ENCODE measurements at regions of chr15 and their contacts with region 1.

Region 1: GRCh38 chr15:89378296-89379151 is 43.9 kb upstream of the POLG start:
- DNase-seq: peak; percentile 37
- ATAC-seq: peak; percentile 74
- H3K4me3 Mint-ChIP-seq: peak overlapping the region; percentile 79
- H3K27ac Mint-ChIP-seq: peak overlapping the region; percentile 46
- H3K4me1 Mint-ChIP-seq: peaks cover 13% of the 10 kb centered on the region
- H3K27me3 Mint-ChIP-seq: peaks cover 60% of the 10 kb centered on the region
- CTCF ChIP-seq: no peak

Region 2: GRCh38 chr15:88440021-88440420 is 938.5 kb before region 1 on chr15:
- CTCF ChIA-PET with region 1: no interaction called
- POLR2A ChIA-PET with region 1: no interaction called
- intact Hi-C with region 1: no loop called
- DNase-seq: no peak
- ATAC-seq: no peak
- H3K4me3 Mint-ChIP-seq: no peak overlapping the region
- H3K27ac Mint-ChIP-seq: no peak overlapping the region
- H3K4me1 Mint-ChIP-seq: no peaks in the 10 kb centered on the region
- H3K27me3 Mint-ChIP-seq: peaks cover 44% of the 10 kb centered on the region
- CTCF ChIP-seq: no peak

Region 3: DNA sequence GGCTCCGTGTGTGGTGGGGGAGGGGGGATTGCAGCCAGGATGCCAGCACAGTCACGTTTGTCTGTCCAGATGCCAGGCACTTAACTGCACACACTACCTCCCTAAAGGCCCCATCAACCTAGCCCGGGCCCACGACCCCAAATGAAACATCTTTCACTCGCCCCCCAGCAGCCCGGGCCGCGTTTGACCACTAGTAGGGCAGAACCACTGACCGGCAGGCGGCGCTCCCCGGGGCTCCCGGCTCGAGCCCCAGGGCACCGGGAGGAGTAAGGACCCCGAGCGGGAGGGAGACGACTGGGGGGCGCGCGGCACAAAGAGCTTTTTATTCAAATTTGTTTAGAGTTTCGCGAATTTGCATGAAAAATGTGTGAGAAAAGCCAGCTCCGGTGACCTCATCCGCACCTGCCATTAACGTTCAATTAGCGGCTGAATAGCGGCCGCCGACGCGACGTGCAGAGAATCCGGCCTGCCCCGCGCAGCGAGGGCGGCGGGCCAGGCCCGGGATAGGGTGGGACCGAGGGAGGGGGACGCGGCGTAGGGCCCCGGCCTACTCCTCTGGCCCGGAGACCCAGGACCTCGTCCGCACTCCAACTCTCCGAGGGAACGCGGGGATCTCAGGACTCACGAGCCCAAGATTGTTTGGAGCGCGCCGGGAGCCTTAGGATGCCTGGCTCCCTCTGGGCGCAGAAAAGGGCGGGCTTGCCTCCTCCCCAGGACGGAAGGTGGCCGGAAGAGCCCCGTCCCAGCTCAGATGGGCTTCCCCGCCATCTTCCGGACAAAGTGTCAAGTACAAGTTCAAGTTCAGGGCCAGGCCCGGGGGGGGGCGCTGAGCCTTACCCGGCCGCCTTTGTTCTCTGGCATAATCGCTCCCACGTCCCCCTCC is 21.0 kb after region 1 on chr15:
- CTCF ChIA-PET with region 1: interaction called, 3 read pairs
- POLR2A ChIA-PET with region 1: interaction called, 3 read pairs
- intact Hi-C with region 1: loop called (anchors 2 kb)
- DNase-seq: peak; percentile 35
- ATAC-seq: peak; percentile 76
- H3K4me3 Mint-ChIP-seq: peak overlapping the region; percentile 84
- H3K27ac Mint-ChIP-seq: no peak overlapping the region
- H3K4me1 Mint-ChIP-seq: peaks cover 21% of the 10 kb centered on the region
- H3K27me3 Mint-ChIP-seq: peaks cover 50% of the 10 kb centered on the region
- CTCF ChIP-seq: no peak

Region 4: DNA sequence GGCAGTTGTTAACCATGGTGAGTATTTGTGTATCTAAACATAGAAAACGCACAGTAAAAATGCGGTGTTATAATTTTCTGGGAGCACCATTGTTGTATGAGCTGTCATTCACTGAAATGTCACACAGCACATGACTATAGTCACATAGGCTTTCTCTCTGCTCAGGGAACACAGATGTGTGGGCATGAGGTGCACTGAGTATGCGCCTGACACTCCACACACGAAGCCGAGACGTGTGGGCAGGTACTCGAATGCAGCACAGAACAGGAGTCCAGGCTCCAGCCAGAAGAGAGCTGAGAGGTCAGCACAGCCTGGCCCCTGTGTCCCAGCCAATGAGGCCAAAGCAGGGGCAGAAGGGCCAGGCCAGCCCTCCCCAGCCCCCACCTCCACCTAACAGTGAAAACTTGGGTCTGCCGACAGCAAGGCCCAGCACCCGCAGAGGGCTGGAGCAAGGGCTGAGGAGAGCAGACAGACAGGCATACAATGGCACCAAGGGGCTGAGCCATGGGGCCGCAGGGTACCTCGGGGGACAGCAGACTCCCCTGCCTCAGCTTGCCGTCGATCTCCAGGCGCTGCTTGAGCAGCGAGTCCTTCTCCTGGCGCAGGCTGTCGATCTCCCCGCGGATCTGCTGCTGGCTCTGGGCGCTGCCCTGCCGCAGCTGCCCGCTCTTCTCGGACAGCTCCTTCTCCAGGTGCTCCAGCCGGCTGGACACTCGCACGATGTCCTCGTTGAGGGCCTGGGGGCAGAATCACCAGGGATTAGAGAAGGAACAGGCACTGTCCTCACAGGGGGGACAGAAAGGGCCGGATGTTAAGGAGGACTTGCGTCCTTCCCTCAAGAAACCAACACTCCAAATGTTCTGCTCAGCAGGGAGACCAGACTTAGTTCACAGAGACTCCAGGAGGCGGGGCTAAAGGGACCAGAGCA is 252.7 kb after region 1 on chr15:
- CTCF ChIA-PET with region 1: no interaction called
- POLR2A ChIA-PET with region 1: no interaction called
- intact Hi-C with region 1: no loop called
- DNase-seq: no peak
- ATAC-seq: no peak
- H3K4me3 Mint-ChIP-seq: no peak overlapping the region
- H3K27ac Mint-ChIP-seq: no peak overlapping the region
- H3K4me1 Mint-ChIP-seq: no peaks in the 10 kb centered on the region
- H3K27me3 Mint-ChIP-seq: no peaks in the 10 kb centered on the region
- CTCF ChIP-seq: no peak

Measured in activated B cell treated with CpG ODN at 0.5 μM for 24 hours (primary cell).